ENCODE measurements at regions of chr7 and their contacts with region 1.

Region 1: DNA sequence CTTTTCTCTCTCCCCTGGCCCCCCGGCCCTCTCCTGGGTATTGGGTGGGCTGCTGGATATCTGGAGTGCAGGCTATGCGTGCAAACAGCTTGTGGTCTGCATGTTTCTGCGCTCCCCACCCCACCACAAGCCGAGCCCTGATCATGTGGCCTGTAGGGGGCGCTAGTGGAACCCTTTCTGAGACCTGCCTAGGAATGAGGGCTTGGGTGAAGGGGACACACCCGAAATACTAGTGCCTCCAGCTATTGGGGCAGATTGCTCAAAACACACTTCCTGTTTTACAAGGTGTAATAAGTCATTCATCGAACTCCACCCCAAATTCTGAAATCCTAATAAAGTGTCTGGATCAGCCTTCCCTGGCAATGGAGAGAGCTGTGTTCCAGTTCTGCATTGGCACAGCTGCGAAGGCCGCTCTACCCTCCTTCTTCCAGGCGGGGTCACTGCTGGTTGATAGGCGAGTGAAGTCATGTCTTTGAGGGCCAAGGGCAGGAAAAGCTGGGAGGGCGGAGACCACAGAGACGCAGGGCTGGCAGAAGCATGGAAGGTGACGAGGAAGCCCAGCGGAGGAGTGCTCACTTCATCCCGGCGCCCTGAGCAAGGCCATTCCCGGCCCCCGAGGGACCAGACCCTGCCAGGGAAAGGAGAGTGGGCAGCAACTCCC is 19.8 kb upstream of the PRRT4 start:
- DNase-seq: peak in 8 of 14 experiments; percentile 12 to 54 (median 24)
- ATAC-seq: no peak
- H3K4me3 ChIP-seq: no peak overlapping the region
- H3K4me3 Mint-ChIP-seq: no peak overlapping the region
- H3K27ac ChIP-seq: no peak overlapping the region
- H3K27ac Mint-ChIP-seq: no peak overlapping the region
- H3K4me1 ChIP-seq: peaks cover 5% of the 10 kb centered on the region
- H3K4me1 Mint-ChIP-seq: no peaks in the 10 kb centered on the region
- H3K27me3 ChIP-seq: no peaks in the 10 kb centered on the region
- H3K27me3 Mint-ChIP-seq: no peaks in the 10 kb centered on the region
- CTCF ChIP-seq: peak; percentile 46

Region 2: DNA sequence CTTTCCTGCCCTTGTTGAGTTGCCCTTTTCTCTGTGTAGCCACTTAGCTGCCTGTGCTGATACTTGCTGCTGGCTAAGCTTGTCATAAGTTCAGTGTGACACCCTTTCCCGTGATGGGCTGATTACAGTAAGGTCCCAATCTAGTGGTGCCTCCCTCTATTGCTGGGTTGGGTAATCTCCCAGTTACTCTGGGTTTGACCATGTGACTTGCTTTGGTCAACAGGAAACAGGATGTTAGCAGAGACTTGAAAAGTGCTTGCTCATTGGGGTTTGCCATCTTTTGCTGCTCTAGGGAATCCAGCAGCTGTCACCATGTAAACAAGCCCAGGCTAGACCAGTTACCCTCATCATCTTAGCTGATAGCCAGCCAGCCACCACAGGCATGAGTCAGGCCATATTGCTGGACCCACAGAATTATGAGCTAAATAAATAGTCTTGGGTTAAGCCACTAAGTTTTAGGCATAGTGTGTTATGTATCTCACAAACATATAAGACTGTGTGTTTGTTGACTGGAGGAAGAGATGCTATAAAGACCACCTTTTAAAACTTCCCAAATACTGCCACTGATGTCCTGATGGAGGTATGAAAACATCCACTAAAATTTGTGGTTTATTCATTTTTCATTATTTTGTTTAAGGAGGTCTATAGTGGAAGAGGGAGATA is 144.2 kb before region 1 on chr7:
- CTCF ChIA-PET with region 1: no interaction called
- POLR2A ChIA-PET with region 1: no interaction called
- intact Hi-C with region 1: no loop called
- DNase-seq: peak in 3 of 14 experiments; percentile 37 to 69 (median 57)
- ATAC-seq: peak; percentile 26
- H3K4me3 ChIP-seq: no peak overlapping the region
- H3K4me3 Mint-ChIP-seq: no peak overlapping the region
- H3K27ac ChIP-seq: no peak overlapping the region
- H3K27ac Mint-ChIP-seq: no peak overlapping the region
- H3K4me1 ChIP-seq: peaks cover 6% of the 10 kb centered on the region
- H3K4me1 Mint-ChIP-seq: peaks cover 6% of the 10 kb centered on the region
- H3K27me3 ChIP-seq: peaks cover 15 to 17% of the 10 kb centered on the region in 2 experiments
- H3K27me3 Mint-ChIP-seq: peaks cover 25% of the 10 kb centered on the region
- CTCF ChIP-seq: no peak

Region 3: GRCh38 chr7:128770233-128770632 is 388.9 kb after region 1 on chr7:
- CTCF ChIA-PET with region 1: no interaction called
- POLR2A ChIA-PET with region 1: no interaction called
- intact Hi-C with region 1: no loop called
- DNase-seq: no peak
- ATAC-seq: no peak
- H3K4me3 ChIP-seq: no peak overlapping the region
- H3K4me3 Mint-ChIP-seq: no peak overlapping the region
- H3K27ac ChIP-seq: no peak overlapping the region
- H3K27ac Mint-ChIP-seq: no peak overlapping the region
- H3K4me1 ChIP-seq: no peaks in the 10 kb centered on the region
- H3K4me1 Mint-ChIP-seq: no peaks in the 10 kb centered on the region
- H3K27me3 ChIP-seq: no peaks in the 10 kb centered on the region
- H3K27me3 Mint-ChIP-seq: no peaks in the 10 kb centered on the region
- CTCF ChIP-seq: no peak

Region 4: DNA sequence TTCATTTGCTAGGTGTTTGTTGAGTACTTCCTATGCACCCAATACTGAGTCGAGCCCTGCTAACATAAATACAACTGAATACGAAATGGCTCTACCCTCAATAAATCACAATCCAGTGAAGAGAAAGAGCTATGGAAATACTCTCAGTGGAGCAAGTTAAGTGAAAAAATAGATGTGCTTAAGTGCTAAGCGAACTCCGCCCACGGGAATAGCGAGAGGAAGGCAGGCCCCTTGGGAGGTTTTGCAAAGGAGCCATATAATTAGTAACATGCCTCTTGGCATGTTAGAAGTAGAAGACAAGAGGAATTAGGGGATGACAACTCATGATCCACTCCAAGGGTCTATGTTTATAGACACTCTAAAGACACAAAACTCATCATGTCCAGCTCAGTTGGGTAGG is 720.5 kb after region 1 on chr7:
- CTCF ChIA-PET with region 1: no interaction called
- POLR2A ChIA-PET with region 1: no interaction called
- intact Hi-C with region 1: loop called in 1 of 2 experiments (anchors 5 kb)
- DNase-seq: no peak
- ATAC-seq: no peak
- H3K4me3 ChIP-seq: no peak overlapping the region
- H3K4me3 Mint-ChIP-seq: no peak overlapping the region
- H3K27ac ChIP-seq: no peak overlapping the region
- H3K27ac Mint-ChIP-seq: no peak overlapping the region
- H3K4me1 ChIP-seq: no peaks in the 10 kb centered on the region
- H3K4me1 Mint-ChIP-seq: peaks cover 3% of the 10 kb centered on the region
- H3K27me3 ChIP-seq: no peaks in the 10 kb centered on the region
- H3K27me3 Mint-ChIP-seq: no peaks in the 10 kb centered on the region
- CTCF ChIP-seq: no peak